K562 (cell line): ENCODE measurements at regions of chr4 and their contacts with region 1.

Region 1: DNA sequence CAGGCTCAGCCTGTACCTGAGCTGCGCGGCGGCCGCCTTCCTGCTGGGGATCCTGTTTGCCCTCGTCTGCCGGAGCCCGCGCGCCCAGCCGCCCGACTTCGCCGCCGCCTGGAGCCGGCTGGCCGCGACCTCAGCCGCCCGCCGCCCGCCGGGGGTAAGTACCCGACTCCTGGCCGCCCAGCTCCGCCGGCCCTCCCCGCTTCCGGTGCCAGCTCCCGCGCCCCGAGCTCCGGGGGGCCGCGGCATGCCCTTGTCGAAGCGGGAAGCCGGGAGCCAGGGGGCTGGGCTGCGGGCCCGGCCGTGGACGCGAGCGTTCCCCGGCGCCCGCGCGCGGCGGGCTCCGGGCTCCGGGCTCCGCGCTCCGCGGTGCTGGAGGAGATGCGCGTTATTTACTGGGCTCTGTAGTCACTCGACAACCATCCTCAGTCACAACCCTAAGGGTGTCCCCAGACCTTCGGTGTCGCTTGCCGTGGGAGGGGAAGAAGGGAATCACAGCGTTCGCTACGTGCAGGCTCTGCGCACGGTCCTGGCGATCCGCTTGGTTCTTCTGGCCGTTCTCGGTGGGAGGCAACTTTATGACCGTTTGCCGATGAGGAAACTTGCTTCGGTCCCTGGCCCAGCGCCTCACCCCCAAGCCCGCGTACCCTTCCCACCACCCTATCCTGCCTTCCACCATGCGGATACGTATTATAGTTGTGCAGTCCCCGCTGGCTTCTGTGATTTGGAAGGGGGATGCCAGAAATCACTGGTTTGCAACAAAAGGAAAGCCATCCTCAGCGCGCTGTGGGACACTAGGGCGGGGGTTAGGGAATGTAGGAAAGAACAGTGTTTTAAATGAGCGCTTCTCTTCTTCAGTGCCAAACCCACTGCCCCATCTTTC is 944 bp downstream of the SNX25 start:
- DNase-seq: peak; percentile 35 to 55 (median 51)
- ATAC-seq: peak; percentile 37
- H3K4me3 ChIP-seq: peak overlapping the region; percentile 68
- H3K27ac ChIP-seq: peak overlapping the region; percentile 44; the same call in 1 of the 3 replicates
- H3K4me1 ChIP-seq: peaks cover 28 to 36% of the 10 kb centered on the region in 2 experiments; a peak in 4 of 5 replicates
- H3K27me3 ChIP-seq: no peaks in the 10 kb centered on the region
- CTCF ChIP-seq: no peak
- EP300 ChIP-seq: no peak
- POLR2A ChIP-seq: no peak
- RAD21 ChIP-seq: no peak

Region 2: GRCh38 chr4:185244763-185245162 is 34.4 kb after region 1 on chr4:
- CTCF ChIA-PET with region 1: no interaction called
- POLR2A ChIA-PET with region 1: no interaction called
- in situ Hi-C with region 1: no loop called
- intact Hi-C with region 1: loop called (anchors 5 kb)
- DNase-seq: no peak
- ATAC-seq: no peak
- H3K4me3 ChIP-seq: no peak overlapping the region
- H3K27ac ChIP-seq: no peak overlapping the region
- H3K4me1 ChIP-seq: no peaks in the 10 kb centered on the region; a peak in 4 of 5 replicates
- H3K27me3 ChIP-seq: no peaks in the 10 kb centered on the region
- CTCF ChIP-seq: no peak
- EP300 ChIP-seq: no peak
- POLR2A ChIP-seq: no peak
- RAD21 ChIP-seq: no peak